ENCODE measurements at regions of chr19 and their contacts with region 1.

Region 1: DNA sequence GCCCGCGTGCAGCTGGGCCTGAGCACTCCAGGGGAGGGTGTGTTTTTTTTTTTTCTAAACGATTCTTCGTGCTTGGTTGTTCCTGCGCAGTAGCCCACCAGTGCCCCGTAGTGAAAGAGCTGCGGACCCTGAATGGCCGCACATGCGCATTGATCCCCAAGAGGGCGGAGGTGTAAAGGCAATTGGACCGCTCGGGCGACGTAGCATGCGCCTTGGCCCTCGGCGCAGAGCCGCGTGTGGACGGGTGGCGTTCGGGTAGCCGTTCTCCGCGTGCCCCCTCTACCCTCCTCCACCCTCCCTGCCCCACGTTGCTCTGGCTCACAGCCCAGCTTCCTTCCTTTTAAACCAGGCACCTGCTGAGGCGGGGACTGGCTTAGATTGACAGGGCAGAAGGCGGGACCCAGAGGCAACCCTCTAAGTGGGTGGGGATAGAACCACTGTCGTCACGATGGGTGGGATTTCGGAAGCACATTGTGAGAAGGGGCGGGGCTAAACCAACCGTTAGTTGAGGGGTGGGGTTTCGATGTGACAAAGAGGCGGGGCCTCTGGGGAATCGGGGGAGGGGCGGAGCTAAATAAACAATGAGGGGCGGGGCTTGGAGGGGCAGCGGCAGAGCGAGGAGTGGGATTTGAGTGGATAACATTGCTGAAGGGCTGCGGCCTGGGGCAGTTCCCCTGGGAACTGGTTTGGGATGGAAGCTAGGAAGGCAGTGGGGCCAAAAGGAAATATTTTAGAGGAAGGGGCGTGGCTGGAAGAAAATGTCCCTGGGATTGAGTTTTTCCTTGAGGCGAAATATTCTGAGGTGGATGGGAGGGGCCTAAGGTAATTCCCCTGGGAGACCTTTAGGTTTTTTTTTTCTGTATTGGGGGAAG is 543 bp upstream of the NUP62 start:
- DNase-seq: peak; percentile 97
- ATAC-seq: peak; percentile 91
- H3K4me3 Mint-ChIP-seq: peak overlapping the region; percentile 96
- H3K27ac Mint-ChIP-seq: peak overlapping the region; percentile 98
- H3K4me1 Mint-ChIP-seq: peaks cover 59% of the 10 kb centered on the region
- H3K27me3 Mint-ChIP-seq: no peaks in the 10 kb centered on the region

Region 2: GRCh38 chr19:49085020-49085867 is 844.6 kb before region 1 on chr19 and contains the start of gene SNRNP70:
- CTCF ChIA-PET with region 1: no interaction called
- POLR2A ChIA-PET with region 1: no interaction called
- intact Hi-C with region 1: loop called in 1 of 2 experiments (anchors 2 kb)
- DNase-seq: peak; percentile 99
- ATAC-seq: peak; percentile 99
- H3K4me3 Mint-ChIP-seq: peak within 1 kb of the TSS; percentile 98
- H3K27ac Mint-ChIP-seq: peak within 1 kb of the TSS; percentile 96
- H3K4me1 Mint-ChIP-seq: peaks cover 31% of the 10 kb centered on the region
- H3K27me3 Mint-ChIP-seq: peaks cover 2% of the 10 kb centered on the region
- total RNA-seq, gene SNRNP70: 225 to 306 TPM

Region 3: GRCh38 chr19:49590071-49590970 is 339.5 kb before region 1 on chr19:
- CTCF ChIA-PET with region 1: no interaction called
- POLR2A ChIA-PET with region 1: no interaction called
- intact Hi-C with region 1: loop called in 1 of 2 experiments (anchors 1 kb)
- DNase-seq: peak; percentile 98
- ATAC-seq: peak; percentile 80
- H3K4me3 Mint-ChIP-seq: peak overlapping the region; percentile 79
- H3K27ac Mint-ChIP-seq: peak overlapping the region; percentile 84
- H3K4me1 Mint-ChIP-seq: peaks cover 28% of the 10 kb centered on the region
- H3K27me3 Mint-ChIP-seq: no peaks in the 10 kb centered on the region

Region 4: GRCh38 chr19:49817964-49818648 is 111.7 kb before region 1 on chr19 and contains the start of gene MED25:
- CTCF ChIA-PET with region 1: interaction called, 3 read pairs
- POLR2A ChIA-PET with region 1: no interaction called
- intact Hi-C with region 1: loop called in 1 of 2 experiments (anchors 1 kb)
- DNase-seq: peak; percentile 91
- ATAC-seq: peak; percentile 75
- H3K4me3 Mint-ChIP-seq: peak within 1 kb of the TSS; percentile 87
- H3K27ac Mint-ChIP-seq: peak within 1 kb of the TSS; percentile 99
- H3K4me1 Mint-ChIP-seq: peaks cover 26% of the 10 kb centered on the region
- H3K27me3 Mint-ChIP-seq: no peaks in the 10 kb centered on the region
- total RNA-seq, gene MED25: 39.6 to 49.9 TPM

Region 5: GRCh38 chr19:49869441-49870176 is 60.2 kb before region 1 on chr19:
- CTCF ChIA-PET with region 1: no interaction called
- POLR2A ChIA-PET with region 1: interaction called, 13 read pairs
- intact Hi-C with region 1: loop called in 1 of 2 experiments (anchors 1 kb)
- DNase-seq: peak; percentile 94
- ATAC-seq: peak; percentile 87
- H3K4me3 Mint-ChIP-seq: no peak overlapping the region
- H3K27ac Mint-ChIP-seq: no peak overlapping the region
- H3K4me1 Mint-ChIP-seq: peaks cover 39% of the 10 kb centered on the region
- H3K27me3 Mint-ChIP-seq: no peaks in the 10 kb centered on the region

Region 6: DNA sequence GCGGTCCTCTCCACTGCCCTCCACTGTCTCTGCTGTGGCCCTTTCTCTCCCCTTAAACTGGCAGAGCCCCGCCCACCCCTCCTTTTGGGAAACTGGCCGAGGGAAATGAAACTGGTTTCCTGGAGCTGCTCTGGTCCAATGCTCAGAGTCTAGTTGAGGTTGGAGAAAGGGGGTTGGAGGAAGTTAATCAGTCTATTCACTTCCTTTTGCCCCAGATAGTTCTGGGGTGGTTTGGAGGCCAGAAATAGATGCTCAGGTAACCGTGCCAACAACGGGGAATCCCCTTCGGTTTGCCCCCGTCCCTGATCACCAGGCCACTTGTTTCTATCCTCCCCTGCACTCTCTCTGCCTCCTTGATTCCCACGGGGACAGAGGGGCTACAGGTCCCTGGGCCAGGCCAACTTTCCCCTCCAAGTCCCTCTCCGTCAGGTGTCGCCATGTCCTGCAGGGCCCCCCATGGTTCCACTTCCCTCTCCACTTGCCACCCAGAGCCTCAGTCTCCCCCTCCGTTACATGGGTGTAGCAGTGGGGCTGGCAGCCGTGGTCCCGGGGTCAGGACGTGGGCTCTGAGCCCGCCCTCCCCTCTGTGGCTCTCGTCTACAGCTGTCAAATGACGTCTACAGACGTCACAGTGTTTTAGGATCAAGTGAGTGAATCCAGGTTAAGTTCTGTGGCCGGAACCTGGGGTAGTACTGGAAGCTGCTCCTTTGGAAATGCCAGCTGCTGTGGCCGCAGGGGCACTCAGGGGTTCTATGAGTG is 32.8 kb before region 1 on chr19 and contains the start of gene IL4I1:
- CTCF ChIA-PET with region 1: interaction called, 3 read pairs
- POLR2A ChIA-PET with region 1: interaction called, 16 read pairs
- intact Hi-C with region 1: loop called (anchors 1 to 5 kb)
- DNase-seq: peak; percentile 79
- ATAC-seq: peak; percentile 65
- H3K4me3 Mint-ChIP-seq: peak within 1 kb of the TSS; percentile 70
- H3K27ac Mint-ChIP-seq: peak within 1 kb of the TSS; percentile 95
- H3K4me1 Mint-ChIP-seq: peaks cover 49% of the 10 kb centered on the region
- H3K27me3 Mint-ChIP-seq: no peaks in the 10 kb centered on the region
- total RNA-seq, gene IL4I1: 21.2 to 22.2 TPM

Region 7: GRCh38 chr19:49983645-49984229 is 53.9 kb after region 1 on chr19:
- CTCF ChIA-PET with region 1: interaction called, 8 read pairs
- POLR2A ChIA-PET with region 1: interaction called, 4 read pairs
- intact Hi-C with region 1: loop called in 1 of 2 experiments (anchors 2 kb)
- DNase-seq: peak; percentile 90
- ATAC-seq: peak; percentile 82
- H3K4me3 Mint-ChIP-seq: no peak overlapping the region
- H3K27ac Mint-ChIP-seq: no peak overlapping the region
- H3K4me1 Mint-ChIP-seq: peaks cover 13% of the 10 kb centered on the region
- H3K27me3 Mint-ChIP-seq: no peaks in the 10 kb centered on the region